ENCODE measurements at regions of chr6 and their contacts with region 1.

Region 1: GRCh38 chr6:89999154-89999553 is 104.9 kb downstream of the GJA10 start:
- DNase-seq: peak; percentile 60
- H3K4me3 Mint-ChIP-seq: no peak overlapping the region
- H3K27ac Mint-ChIP-seq: no peak overlapping the region
- H3K4me1 Mint-ChIP-seq: peaks cover 43% of the 10 kb centered on the region
- H3K27me3 Mint-ChIP-seq: no peaks in the 10 kb centered on the region

Region 2: GRCh38 chr6:89638320-89639195 is 360.6 kb before region 1 on chr6 and contains the start of gene LYRM2:
- CTCF ChIA-PET with region 1: no interaction called
- intact Hi-C with region 1: no loop called
- DNase-seq: peak; percentile 95
- H3K4me3 Mint-ChIP-seq: peak within 1 kb of the TSS; percentile 83
- H3K27ac Mint-ChIP-seq: peak within 1 kb of the TSS; percentile 96
- H3K4me1 Mint-ChIP-seq: peaks cover 28% of the 10 kb centered on the region
- H3K27me3 Mint-ChIP-seq: no peaks in the 10 kb centered on the region
- total RNA-seq, gene LYRM2: 15.8 to 18.3 TPM

Region 3: GRCh38 chr6:89952686-89953085 is 46.5 kb before region 1 on chr6:
- CTCF ChIA-PET with region 1: no interaction called
- intact Hi-C with region 1: loop called (anchors 2 kb)
- DNase-seq: peak; percentile 70
- H3K4me3 Mint-ChIP-seq: no peak overlapping the region
- H3K27ac Mint-ChIP-seq: peak overlapping the region; percentile 75
- H3K4me1 Mint-ChIP-seq: peaks cover 74% of the 10 kb centered on the region
- H3K27me3 Mint-ChIP-seq: no peaks in the 10 kb centered on the region

Region 4: DNA sequence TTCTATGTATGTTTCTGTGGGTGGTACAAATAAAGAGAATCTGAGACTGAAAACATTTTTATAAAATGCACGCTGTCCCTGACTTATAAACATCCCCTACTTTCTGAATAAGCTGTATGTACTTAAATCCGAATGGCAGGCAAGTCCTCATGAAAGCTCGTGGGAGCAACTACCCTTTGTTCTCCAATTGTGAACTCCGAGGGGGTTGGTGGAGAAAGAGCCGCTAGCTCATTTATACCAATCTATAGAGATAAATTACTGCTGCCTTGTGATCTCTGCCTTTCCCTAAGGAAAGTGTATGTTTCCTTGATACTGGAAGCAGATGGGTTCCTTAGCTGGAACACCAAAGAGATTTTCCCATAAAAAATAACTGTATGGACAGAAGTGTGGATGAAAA is 20.4 kb before region 1 on chr6:
- CTCF ChIA-PET with region 1: no interaction called
- intact Hi-C with region 1: loop called (anchors 1 kb)
- DNase-seq: no peak
- H3K4me3 Mint-ChIP-seq: no peak overlapping the region
- H3K27ac Mint-ChIP-seq: no peak overlapping the region
- H3K4me1 Mint-ChIP-seq: peaks cover 45% of the 10 kb centered on the region
- H3K27me3 Mint-ChIP-seq: no peaks in the 10 kb centered on the region

Region 5: GRCh38 chr6:89986650-89987074 is 12.5 kb before region 1 on chr6:
- CTCF ChIA-PET with region 1: interaction called, 7 read pairs
- intact Hi-C with region 1: loop called (anchors 1 kb)
- DNase-seq: no peak
- H3K4me3 Mint-ChIP-seq: no peak overlapping the region
- H3K27ac Mint-ChIP-seq: peak overlapping the region; percentile 83
- H3K4me1 Mint-ChIP-seq: peaks cover 80% of the 10 kb centered on the region
- H3K27me3 Mint-ChIP-seq: no peaks in the 10 kb centered on the region

Region 6: GRCh38 chr6:90025523-90026061 is 26.4 kb after region 1 on chr6:
- CTCF ChIA-PET with region 1: interaction called, 6 read pairs
- intact Hi-C with region 1: loop called (anchors 2 kb)
- DNase-seq: peak; percentile 85
- H3K4me3 Mint-ChIP-seq: peak overlapping the region; percentile 47
- H3K27ac Mint-ChIP-seq: peak overlapping the region; percentile 87
- H3K4me1 Mint-ChIP-seq: peaks cover 93% of the 10 kb centered on the region
- H3K27me3 Mint-ChIP-seq: no peaks in the 10 kb centered on the region

Region 7: GRCh38 chr6:90184334-90185298 is 185.5 kb after region 1 on chr6:
- CTCF ChIA-PET with region 1: no interaction called
- intact Hi-C with region 1: loop called (anchors 2 kb)
- DNase-seq: no peak
- H3K4me3 Mint-ChIP-seq: peak overlapping the region; percentile 46
- H3K27ac Mint-ChIP-seq: peak overlapping the region; percentile 66
- H3K4me1 Mint-ChIP-seq: peaks cover 75% of the 10 kb centered on the region
- H3K27me3 Mint-ChIP-seq: no peaks in the 10 kb centered on the region

Region 8: GRCh38 chr6:90730151-90730673 is 731.1 kb after region 1 on chr6:
- CTCF ChIA-PET with region 1: no interaction called
- intact Hi-C with region 1: no loop called
- DNase-seq: no peak
- H3K4me3 Mint-ChIP-seq: no peak overlapping the region
- H3K27ac Mint-ChIP-seq: no peak overlapping the region
- H3K4me1 Mint-ChIP-seq: no peaks in the 10 kb centered on the region
- H3K27me3 Mint-ChIP-seq: peaks cover 4% of the 10 kb centered on the region